WTC11 (cell line): ENCODE measurements at regions of chr5 and their contacts with region 1.

Region 1: GRCh38 chr5:137629646-137630045 is 106.2 kb downstream of the KLHL3 start:
- DNase-seq: peak; percentile 46
- ATAC-seq: peak; percentile 88
- H3K4me3 Mint-ChIP-seq: peak overlapping the region; percentile 30; the same call in 1 of the 2 replicates
- H3K27ac Mint-ChIP-seq: no peak overlapping the region
- H3K4me1 Mint-ChIP-seq: peaks cover 10% of the 10 kb centered on the region
- H3K27me3 Mint-ChIP-seq: no peaks in the 10 kb centered on the region
- CTCF ChIP-seq: peak; percentile 92

Region 2: DNA sequence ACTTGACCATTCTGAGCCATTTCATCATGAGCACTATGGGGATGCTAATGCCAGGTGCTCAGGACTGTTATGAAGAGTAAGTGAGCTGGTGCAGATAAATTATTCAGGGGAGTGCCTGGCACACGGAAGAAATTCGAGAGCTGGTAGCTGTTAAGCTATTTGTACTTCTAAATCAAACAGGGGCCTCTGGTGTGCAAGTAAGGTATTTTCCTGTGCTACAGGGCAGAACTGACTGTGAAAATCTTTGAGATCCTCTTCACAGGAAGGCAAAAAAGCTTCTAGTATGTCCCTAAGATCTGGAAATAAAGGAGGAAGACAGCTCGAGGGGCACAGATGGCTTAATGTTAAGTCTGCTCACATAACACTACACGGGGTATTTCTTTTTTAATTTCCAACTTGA is 24.2 kb before region 1 on chr5:
- CTCF ChIA-PET with region 1: interaction called, 11 read pairs
- POLR2A ChIA-PET with region 1: no interaction called
- DNase-seq: no peak
- ATAC-seq: peak; percentile 36; the same call in 1 of the 2 replicates
- H3K4me3 Mint-ChIP-seq: no peak overlapping the region
- H3K27ac Mint-ChIP-seq: no peak overlapping the region
- H3K4me1 Mint-ChIP-seq: peaks cover 7% of the 10 kb centered on the region
- H3K27me3 Mint-ChIP-seq: no peaks in the 10 kb centered on the region; the same call in 1 of the 2 replicates
- CTCF ChIP-seq: no peak

Region 3: GRCh38 chr5:137641148-137641547 is 11.5 kb after region 1 on chr5:
- CTCF ChIA-PET with region 1: interaction called, 40 read pairs
- POLR2A ChIA-PET with region 1: no interaction called
- DNase-seq: no peak
- ATAC-seq: no peak
- H3K4me3 Mint-ChIP-seq: no peak overlapping the region
- H3K27ac Mint-ChIP-seq: no peak overlapping the region
- H3K4me1 Mint-ChIP-seq: no peaks in the 10 kb centered on the region
- H3K27me3 Mint-ChIP-seq: no peaks in the 10 kb centered on the region
- CTCF ChIP-seq: no peak

Region 4: DNA sequence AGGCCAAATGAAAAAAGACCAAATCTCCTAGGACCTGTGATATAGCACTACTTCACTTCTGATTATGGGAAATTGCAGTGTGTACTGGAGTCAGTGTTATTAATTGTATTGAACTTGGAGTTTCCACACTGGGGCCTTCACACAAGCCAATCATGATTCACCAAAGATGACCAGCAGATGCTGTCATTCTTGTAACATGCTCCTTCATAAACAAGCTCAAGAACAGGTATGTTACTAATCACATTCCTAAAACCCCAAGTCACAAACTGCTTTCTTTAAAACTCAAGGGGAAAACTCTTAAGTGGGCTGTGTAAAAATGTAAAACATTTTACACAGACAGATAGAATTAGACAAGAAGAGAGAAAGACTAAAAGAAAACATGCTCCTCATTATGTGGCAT is 100.7 kb after region 1 on chr5:
- CTCF ChIA-PET with region 1: interaction called, 43 read pairs
- POLR2A ChIA-PET with region 1: interaction called, 4 read pairs
- DNase-seq: no peak
- ATAC-seq: no peak
- H3K4me3 Mint-ChIP-seq: no peak overlapping the region
- H3K27ac Mint-ChIP-seq: no peak overlapping the region
- H3K4me1 Mint-ChIP-seq: no peaks in the 10 kb centered on the region; the same call in 1 of the 2 replicates
- H3K27me3 Mint-ChIP-seq: no peaks in the 10 kb centered on the region
- CTCF ChIP-seq: no peak

Region 5: DNA sequence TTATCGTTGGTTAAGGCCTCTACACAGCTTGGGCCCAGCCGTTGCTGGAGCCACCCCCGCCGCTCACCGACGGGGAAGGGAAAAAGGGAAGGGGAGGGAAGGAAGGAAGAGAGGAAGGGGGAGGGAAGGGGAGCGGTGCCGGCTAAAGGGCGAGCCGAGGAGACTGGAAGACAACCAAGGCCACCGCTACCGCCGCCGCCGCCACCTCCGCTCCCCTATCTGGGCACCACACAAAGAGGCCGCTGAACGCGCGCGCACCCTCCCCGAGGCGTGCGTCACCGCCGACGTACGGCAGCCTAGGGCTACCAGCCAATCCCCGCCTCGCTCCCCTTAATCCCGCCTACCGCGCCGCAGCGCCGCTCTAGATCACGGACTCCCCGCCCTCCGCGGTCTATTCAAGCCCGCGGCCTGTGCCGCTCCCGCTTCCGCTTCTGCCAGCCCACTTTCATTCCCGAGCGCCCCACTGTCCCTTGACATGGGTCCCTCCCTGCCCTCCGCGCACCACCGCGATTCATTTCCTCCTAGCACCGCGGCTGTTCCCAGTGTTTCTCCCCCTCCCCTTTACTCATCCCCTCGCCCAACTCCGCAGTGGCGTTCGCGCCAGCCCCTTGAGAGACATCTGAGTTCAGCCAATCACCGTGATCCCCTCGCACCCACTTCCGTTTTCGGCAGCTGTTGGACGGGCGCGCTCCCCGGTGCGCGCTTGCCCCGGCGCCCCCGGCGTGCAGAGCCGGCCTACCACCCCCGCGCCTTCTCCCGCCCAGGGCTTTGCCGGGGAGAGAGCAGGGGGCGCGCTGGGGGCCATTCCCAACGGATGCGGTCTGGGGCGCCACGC is 124.7 kb after region 1 on chr5 and contains the start of gene HNRNPA0:
- CTCF ChIA-PET with region 1: interaction called, 13 read pairs
- POLR2A ChIA-PET with region 1: no interaction called
- DNase-seq: peak; percentile 96
- ATAC-seq: peak; percentile 92
- H3K4me3 Mint-ChIP-seq: peak within 1 kb of the TSS; percentile 95
- H3K27ac Mint-ChIP-seq: peak within 1 kb of the TSS; percentile 100
- H3K4me1 Mint-ChIP-seq: peaks cover 23% of the 10 kb centered on the region
- H3K27me3 Mint-ChIP-seq: peaks cover 29% of the 10 kb centered on the region
- CTCF ChIP-seq: no peak
- total RNA-seq, gene HNRNPA0: 65.6 to 66.6 TPM (median 66.0 TPM) in 3 replicates